ENCODE measurements at regions of chr6 and their contacts with region 1.

Region 1: DNA sequence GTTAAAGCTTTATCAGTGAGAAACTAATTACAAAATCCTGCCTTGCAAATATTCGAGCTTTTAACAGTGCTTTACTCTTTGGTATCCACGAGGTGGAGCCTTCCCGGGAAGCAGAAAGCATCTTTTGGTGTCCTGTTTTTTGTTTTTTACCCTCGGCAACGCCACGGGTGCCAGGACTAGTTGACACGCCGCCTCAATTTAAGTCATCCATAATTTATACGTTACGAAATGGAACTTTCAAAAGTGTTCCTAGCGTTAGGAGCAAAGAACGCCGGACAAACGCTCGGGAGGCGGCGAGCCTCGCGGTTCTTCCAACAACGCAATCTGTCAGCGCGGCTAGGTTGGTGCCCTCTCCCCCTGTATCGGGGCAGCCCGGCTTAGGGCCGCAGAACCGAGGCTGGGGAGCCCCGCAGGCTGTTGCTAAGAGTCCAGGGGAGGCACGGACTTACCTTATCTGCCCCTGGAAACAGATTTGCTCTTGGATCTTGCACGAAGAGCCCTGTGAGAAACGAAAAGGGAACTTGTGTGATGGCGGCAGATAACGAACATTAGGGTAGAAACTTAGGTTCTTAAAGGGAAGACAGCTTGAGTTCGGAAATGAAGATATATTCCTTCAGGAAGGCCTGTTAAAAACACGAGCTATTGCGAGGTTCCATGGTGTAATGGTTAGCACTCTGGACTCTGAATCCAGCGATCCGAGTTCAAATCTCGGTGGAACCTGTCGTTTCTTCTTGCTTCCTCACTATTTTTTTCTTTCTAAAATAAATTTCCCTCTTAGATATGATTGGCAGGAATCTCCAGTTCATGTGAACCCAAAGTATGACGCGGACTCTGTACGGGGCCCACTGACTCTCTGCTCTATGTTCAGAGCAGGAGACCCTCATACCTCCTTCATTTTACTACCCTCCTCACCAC is 46.2 kb upstream of the ZNF184 start:
- DNase-seq: peak; percentile 66 to 93 (median 69)
- ATAC-seq: peak; percentile 89
- H3K4me3 ChIP-seq: peak overlapping the region; percentile 69
- H3K27ac ChIP-seq: peak overlapping the region; percentile 82
- H3K4me1 ChIP-seq: peaks cover 4 to 7% of the 10 kb centered on the region in 2 experiments; a peak in 3 of 5 replicates
- H3K27me3 ChIP-seq: no peaks in the 10 kb centered on the region
- CTCF ChIP-seq: peak; percentile 77 to 90 (median 86)
- EP300 ChIP-seq: peak; percentile 63
- POLR2A ChIP-seq: peak; percentile 66
- RAD21 ChIP-seq: peak; percentile 76 to 80

Region 2: GRCh38 chr6:27532820-27533538 is 13.8 kb after region 1 on chr6:
- CTCF ChIA-PET with region 1: no interaction called
- POLR2A ChIA-PET with region 1: interaction called, 7 read pairs
- in situ Hi-C with region 1: no loop called
- intact Hi-C with region 1: loop called (anchors 1 kb)
- DNase-seq: no peak
- ATAC-seq: peak; percentile 42
- H3K4me3 ChIP-seq: no peak overlapping the region
- H3K27ac ChIP-seq: no peak overlapping the region
- H3K4me1 ChIP-seq: peaks cover 4 to 13% of the 10 kb centered on the region in 2 experiments; a peak in 4 of 5 replicates
- H3K27me3 ChIP-seq: no peaks in the 10 kb centered on the region
- CTCF ChIP-seq: no peak
- EP300 ChIP-seq: no peak
- POLR2A ChIP-seq: no peak
- RAD21 ChIP-seq: no peak

Region 3: DNA sequence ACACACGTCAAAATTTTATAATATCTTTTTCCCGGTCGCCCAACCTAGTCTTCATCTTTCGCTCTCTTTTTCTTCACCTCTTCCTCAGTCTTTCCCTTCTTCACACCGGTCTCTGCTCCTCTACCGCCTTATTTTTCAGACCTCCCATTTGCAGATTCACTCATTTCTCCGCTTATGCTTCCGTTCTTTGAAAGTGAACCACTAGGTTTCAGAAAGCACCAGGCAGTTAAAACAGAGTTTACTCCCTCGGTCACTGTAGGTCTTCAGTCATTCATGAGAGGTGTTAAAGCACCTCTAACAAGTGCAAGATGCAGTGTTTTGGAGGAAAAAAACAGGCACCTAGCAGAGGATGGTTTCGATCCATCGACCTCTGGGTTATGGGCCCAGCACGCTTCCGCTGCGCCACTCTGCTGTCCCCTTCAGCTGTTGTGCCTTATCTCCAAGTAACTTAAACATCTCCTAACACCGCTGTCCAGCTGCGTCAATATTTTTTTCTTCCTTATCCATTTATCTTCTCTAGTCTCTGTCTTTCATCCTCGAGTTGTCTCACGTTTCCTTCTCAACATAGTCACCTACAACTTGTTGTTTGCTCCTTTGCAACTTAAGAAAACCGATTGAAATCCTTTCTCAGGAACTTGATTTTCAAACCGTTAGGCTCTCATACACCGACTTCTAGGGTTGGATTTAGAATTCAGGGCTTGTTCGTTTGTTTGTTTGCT is 73.5 kb after region 1 on chr6:
- CTCF ChIA-PET with region 1: interaction called, 3 read pairs
- POLR2A ChIA-PET with region 1: interaction called, 6 read pairs
- in situ Hi-C with region 1: no loop called
- intact Hi-C with region 1: loop called (anchors 2 kb)
- DNase-seq: peak; percentile 76 to 94 (median 86)
- ATAC-seq: peak; percentile 94
- H3K4me3 ChIP-seq: peak overlapping the region; percentile 48
- H3K27ac ChIP-seq: peak overlapping the region; percentile 53
- H3K4me1 ChIP-seq: peaks cover 8 to 13% of the 10 kb centered on the region in 2 experiments; a peak in 4 of 5 replicates
- H3K27me3 ChIP-seq: no peaks in the 10 kb centered on the region
- CTCF ChIP-seq: peak in 1 of 3 experiments; percentile 20; a peak in 2 of 6 replicates
- EP300 ChIP-seq: peak; percentile 84
- POLR2A ChIP-seq: no peak
- RAD21 ChIP-seq: peak; percentile 33 to 47; a peak in 3 of 4 replicates